GM10248 (cell line): ENCODE measurements at regions of chr3 and their contacts with region 1.

Region 1: DNA sequence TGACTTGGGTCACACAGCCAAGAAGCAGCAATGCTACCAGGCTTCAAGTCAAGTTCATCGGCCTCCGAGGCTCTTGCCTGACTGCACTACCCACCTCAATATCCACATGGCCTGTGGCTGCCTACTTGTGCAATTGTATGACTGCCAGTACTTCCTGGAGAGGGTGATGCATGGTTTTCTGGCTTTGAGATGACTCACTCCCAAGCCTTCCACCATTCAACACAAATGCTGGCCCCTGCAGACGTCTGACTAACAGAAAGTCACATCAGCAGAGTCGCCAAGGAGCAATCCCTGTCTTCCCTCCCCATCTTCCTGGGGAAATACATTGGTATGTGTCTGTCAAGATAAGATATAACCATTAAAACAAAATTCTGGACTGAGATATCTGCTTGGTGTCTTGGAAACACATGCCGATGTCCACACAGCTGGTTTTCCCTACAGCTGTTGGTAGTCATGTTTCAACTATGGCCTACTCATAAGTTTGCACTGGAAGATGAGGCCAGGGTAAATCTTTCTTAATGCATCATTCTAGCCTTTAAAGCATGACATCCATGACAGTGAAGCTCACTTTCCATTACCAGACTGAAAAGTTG is 79.6 kb upstream of the SPATA12 start:
- DNase-seq: no peak
- CTCF ChIP-seq: no peak

Region 2: GRCh38 chr3:56930706-56931105 is 50.2 kb before region 1 on chr3:
- CTCF ChIA-PET with region 1: no interaction called
- POLR2A ChIA-PET with region 1: no interaction called
- DNase-seq: no peak
- CTCF ChIP-seq: no peak

Region 3: DNA sequence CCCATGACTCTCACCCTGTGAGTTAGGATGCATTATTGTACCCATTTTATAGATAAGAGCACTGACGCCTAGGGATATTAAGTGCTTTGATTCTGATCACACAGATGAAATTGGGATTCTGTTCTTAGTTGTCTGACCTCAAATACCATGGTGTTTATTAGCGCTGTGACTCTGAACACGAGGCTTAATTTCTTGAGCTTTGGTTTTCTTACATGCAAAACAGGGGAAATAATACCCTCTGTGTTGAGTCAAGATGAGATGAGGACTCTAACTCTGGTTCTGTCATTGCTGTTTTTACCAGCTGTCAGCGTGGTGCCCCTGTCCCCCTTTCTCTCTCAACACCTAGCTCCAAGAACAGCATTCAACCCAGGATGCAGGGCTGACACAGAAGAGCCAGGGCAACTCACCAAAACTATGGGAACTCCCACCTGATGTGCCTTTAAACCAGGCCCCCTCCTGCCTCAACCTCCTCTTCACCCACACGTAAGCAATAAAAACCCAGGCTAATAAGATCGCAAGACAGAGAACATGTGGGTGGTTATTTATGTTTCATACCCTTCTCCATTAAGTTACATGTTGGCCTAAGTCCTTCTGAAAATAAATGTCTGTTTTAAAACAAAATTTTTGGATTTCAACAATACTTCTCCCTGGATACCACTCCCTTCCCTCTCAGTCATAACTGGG is 20.5 kb before region 1 on chr3:
- CTCF ChIA-PET with region 1: interaction called, 13 read pairs
- POLR2A ChIA-PET with region 1: no interaction called
- DNase-seq: peak; percentile 58
- CTCF ChIP-seq: no peak

Region 4: GRCh38 chr3:57091521-57092273 is 110.8 kb after region 1 on chr3:
- CTCF ChIA-PET with region 1: no interaction called
- POLR2A ChIA-PET with region 1: no interaction called
- DNase-seq: no peak
- CTCF ChIP-seq: no peak

Region 5: DNA sequence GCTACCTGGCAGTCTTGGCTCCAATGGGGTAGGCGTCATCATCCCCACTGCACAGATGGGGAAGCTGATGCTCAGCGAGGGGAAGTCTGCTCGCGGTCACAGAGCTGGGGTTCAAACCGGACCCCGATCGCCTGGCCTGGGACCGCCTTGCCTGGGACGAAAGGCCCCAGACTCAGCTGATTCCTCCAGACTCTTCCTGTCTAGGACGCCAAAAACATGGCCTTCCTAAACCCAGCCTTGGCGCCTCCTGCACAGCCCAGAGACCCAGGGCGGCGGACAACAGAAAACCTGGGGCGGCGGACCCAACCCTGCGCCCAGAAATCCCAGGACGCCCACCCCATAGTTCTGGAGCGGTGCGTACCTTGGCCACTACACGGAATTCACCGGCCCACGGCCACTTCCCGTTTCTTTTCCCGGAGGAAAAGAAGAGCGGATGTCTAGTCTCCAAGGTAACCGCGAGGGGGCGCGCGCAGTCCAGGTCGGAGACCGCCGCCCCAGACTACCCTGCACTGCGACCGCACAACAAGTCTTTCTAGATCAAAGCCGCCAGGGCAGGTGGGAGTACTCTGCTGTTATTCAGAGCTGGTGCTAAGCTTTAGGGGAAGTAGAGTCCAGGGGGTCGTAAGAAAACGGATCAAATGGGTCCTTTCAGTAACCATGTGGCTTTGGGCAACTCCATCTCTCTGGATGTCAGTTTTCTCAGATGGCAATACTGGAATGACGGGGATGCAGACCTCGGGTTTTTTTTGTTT is 189.2 kb after region 1 on chr3:
- CTCF ChIA-PET with region 1: no interaction called
- POLR2A ChIA-PET with region 1: no interaction called
- DNase-seq: peak; percentile 74
- CTCF ChIP-seq: peak; percentile 88